Calu3 (cell line): ENCODE measurements at regions of chr3 and their contacts with region 1.

Region 1: DNA sequence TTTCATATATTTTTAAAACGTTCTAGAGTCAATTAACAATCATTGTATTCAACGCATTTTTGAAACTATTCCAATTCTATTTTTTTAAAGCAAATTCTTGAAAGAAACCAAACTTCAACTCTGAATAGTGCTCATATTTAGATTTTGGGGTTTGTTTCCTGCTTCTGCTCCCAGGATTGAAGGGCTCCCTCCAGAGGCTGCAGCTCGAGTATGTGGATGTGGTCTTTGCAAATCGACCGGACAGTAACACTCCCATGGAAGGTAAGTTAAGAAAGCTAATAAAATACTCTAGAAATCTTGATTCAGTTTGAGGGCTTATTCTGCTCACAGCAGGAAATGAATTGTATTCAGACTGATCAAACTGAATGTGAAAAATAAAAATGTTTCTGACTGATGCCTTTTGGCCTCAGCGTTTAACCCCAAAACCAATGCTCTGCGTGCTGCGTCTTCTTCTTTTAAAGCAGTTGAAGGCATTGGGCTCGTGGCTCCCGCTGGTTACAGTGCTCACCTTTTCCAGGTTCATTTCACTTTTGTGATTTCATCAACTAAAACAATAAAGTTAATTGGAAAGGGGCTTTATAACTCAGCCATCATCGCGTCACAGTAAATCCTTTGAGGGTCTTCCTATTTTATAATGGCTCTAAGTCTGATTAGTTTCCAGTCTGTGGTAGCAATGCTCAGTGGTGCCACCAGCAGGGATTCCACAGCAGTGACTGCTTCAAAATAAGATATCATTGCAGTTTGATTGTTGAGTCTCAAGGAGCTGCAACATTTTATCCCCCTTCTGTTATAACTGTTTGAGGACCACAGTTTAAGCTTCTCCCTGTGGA is 80.1 kb downstream of the SSR3 start:
- DNase-seq: no peak
- H3K4me3 Mint-ChIP-seq: no peak overlapping the region
- H3K27ac Mint-ChIP-seq: no peak overlapping the region
- H3K4me1 Mint-ChIP-seq: peaks cover 17% of the 10 kb centered on the region
- H3K27me3 Mint-ChIP-seq: no peaks in the 10 kb centered on the region
- CTCF ChIP-seq: peak; percentile 53

Region 2: GRCh38 chr3:156449712-156450574 is 24.8 kb before region 1 on chr3:
- CTCF ChIA-PET with region 1: interaction called, 6 read pairs
- intact Hi-C with region 1: loop called (anchors 2 kb)
- DNase-seq: peak; percentile 39
- H3K4me3 Mint-ChIP-seq: no peak overlapping the region
- H3K27ac Mint-ChIP-seq: no peak overlapping the region
- H3K4me1 Mint-ChIP-seq: no peaks in the 10 kb centered on the region
- H3K27me3 Mint-ChIP-seq: no peaks in the 10 kb centered on the region
- CTCF ChIP-seq: peak; percentile 61

Region 3: GRCh38 chr3:156456771-156457224 is 18.0 kb before region 1 on chr3:
- CTCF ChIA-PET with region 1: interaction called, 12 read pairs
- intact Hi-C with region 1: no loop called
- DNase-seq: peak; percentile 80
- H3K4me3 Mint-ChIP-seq: peak overlapping the region; percentile 57
- H3K27ac Mint-ChIP-seq: peak overlapping the region; percentile 89
- H3K4me1 Mint-ChIP-seq: peaks cover 27% of the 10 kb centered on the region
- H3K27me3 Mint-ChIP-seq: no peaks in the 10 kb centered on the region
- CTCF ChIP-seq: no peak

Region 4: GRCh38 chr3:156643729-156644389 is 169.1 kb after region 1 on chr3:
- CTCF ChIA-PET with region 1: no interaction called
- intact Hi-C with region 1: no loop called
- DNase-seq: no peak
- H3K4me3 Mint-ChIP-seq: no peak overlapping the region
- H3K27ac Mint-ChIP-seq: no peak overlapping the region
- H3K4me1 Mint-ChIP-seq: no peaks in the 10 kb centered on the region
- H3K27me3 Mint-ChIP-seq: no peaks in the 10 kb centered on the region
- CTCF ChIP-seq: no peak

Region 5: DNA sequence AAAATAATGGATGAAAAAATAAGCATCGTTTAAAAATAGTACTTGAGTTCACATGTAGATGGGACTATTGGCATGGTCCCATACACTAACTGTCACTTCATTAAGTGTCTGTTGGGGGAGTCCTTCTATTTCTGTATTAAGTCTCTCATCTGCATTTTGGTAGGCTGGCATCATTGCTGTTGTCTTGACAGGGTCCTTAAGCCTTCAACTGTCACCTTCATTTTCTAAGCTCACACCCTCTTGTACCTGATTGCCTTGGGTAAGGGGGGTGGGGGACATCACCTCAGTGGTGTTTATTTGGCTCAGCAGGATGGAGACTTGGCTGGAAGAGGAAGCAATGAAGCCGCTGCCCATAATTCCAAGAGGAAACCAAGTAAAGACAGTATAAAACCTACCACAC is 1230.5 kb after region 1 on chr3:
- CTCF ChIA-PET with region 1: no interaction called
- intact Hi-C with region 1: no loop called
- DNase-seq: no peak
- H3K4me3 Mint-ChIP-seq: no peak overlapping the region
- H3K27ac Mint-ChIP-seq: no peak overlapping the region
- H3K4me1 Mint-ChIP-seq: no peaks in the 10 kb centered on the region
- H3K27me3 Mint-ChIP-seq: no peaks in the 10 kb centered on the region
- CTCF ChIP-seq: no peak